Caco-2 (cell line): ENCODE measurements at regions of chr4 and their contacts with region 1.

Region 1: DNA sequence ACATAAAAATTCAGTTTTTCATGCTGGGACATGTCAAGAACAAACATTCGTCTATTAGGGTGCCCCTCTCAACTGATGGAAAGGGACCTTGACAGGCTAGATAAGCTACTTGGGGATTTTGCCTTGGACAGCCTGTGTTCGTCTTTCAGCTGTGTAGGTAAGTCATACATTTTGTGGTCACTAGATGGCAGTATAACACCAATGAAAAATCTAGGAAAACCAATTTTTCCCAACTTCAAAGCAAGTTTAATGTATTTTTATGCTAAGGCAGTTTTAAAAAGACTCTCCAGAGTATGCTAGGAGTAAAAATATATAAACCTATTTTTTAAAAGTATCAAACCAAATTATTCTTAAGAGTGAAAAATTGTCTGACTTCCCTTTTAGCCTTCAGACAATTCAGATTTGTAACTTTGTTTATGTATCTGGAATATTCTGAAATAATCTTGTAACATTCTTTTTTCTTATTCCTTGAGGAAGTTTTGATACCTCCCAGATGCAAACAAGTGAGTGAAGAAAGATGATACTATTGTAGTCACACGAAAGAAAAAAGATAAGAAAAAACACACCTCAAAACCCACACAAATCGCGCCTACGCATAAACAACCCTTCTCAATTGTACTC is 158.3 kb downstream of the CPE start:
- DNase-seq: peak in 1 of 2 experiments; percentile 40
- H3K4me3 ChIP-seq: no peak overlapping the region
- H3K4me3 Mint-ChIP-seq: no peak overlapping the region
- H3K27ac Mint-ChIP-seq: no peak overlapping the region
- H3K4me1 ChIP-seq: no peaks in the 10 kb centered on the region
- H3K4me1 Mint-ChIP-seq: no peaks in the 10 kb centered on the region
- H3K27me3 ChIP-seq: no peaks in the 10 kb centered on the region
- H3K27me3 Mint-ChIP-seq: no peaks in the 10 kb centered on the region
- CTCF ChIP-seq: peak; percentile 39 to 52

Region 2: GRCh38 chr4:165464813-165465381 is 72.2 kb before region 1 on chr4:
- CTCF ChIA-PET with region 1: no interaction called
- POLR2A ChIA-PET with region 1: no interaction called
- intact Hi-C with region 1: no loop called
- DNase-seq: peak in 1 of 2 experiments; percentile 19
- H3K4me3 ChIP-seq: no peak overlapping the region
- H3K4me3 Mint-ChIP-seq: no peak overlapping the region
- H3K27ac Mint-ChIP-seq: no peak overlapping the region
- H3K4me1 ChIP-seq: peaks cover 19% of the 10 kb centered on the region
- H3K4me1 Mint-ChIP-seq: peaks cover 13% of the 10 kb centered on the region
- H3K27me3 ChIP-seq: no peaks in the 10 kb centered on the region
- H3K27me3 Mint-ChIP-seq: no peaks in the 10 kb centered on the region
- CTCF ChIP-seq: peak; percentile 66 to 71

Region 3: DNA sequence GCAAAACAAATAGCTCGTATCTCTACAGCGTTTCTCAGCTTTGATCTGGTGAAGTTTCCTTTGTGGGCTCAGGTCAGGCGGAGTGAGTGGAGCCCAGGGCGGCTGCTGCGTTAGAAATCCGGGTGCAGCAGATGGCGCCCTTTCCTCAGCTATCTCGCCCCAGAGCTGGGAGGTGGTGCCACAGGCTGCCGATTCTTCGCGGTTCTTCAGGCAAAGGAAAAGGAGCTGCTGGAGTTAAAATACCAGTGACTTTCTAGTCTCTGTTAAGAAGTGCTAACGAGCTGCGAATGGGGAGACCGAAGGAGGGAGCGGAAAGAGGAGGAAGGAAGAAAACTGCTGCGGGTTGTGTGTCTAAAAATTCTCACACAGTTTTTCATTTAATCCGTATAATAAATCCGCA is 43.8 kb before region 1 on chr4:
- CTCF ChIA-PET with region 1: interaction called, 11 read pairs
- POLR2A ChIA-PET with region 1: no interaction called
- intact Hi-C with region 1: loop called (anchors 1 kb)
- DNase-seq: peak; percentile 72 to 81
- H3K4me3 ChIP-seq: no peak overlapping the region
- H3K4me3 Mint-ChIP-seq: peak overlapping the region; percentile 48
- H3K27ac Mint-ChIP-seq: no peak overlapping the region
- H3K4me1 ChIP-seq: no peaks in the 10 kb centered on the region
- H3K4me1 Mint-ChIP-seq: peaks cover 7% of the 10 kb centered on the region
- H3K27me3 ChIP-seq: no peaks in the 10 kb centered on the region
- H3K27me3 Mint-ChIP-seq: no peaks in the 10 kb centered on the region
- CTCF ChIP-seq: peak; percentile 70

Region 4: DNA sequence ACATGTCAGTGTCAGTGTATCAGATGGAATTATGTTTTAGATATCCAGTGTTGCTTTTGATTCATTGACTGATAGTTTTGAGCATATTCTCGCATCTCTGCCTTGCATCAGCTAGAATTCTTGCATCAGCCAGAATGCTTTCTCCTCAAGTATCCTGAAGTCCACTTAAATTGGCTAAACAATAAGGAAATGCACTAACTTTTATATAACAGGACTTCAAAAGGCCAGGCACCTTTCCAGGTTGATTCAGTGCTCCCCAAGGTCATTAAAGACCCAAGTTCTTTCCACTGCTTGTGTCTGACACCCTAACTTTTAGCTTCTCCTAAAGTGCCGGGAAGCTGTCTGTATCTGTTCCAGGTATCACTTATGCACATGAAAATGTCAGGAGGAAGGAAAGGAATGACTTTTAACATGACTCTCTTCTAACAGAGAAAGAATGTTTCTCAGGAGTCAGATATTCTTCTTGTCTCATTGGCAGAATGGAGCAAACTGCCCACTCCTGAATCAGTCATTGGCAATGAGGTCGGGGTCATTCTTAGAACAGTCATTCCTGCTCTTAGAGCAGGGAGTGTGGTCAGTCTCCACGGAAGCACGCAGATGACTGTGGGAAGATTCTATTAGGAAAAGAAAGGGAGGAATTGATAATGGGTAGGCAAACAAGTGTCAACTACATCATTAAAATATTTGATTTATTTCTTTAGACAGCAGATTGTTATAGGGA is 243.0 kb after region 1 on chr4:
- CTCF ChIA-PET with region 1: interaction called, 3 read pairs
- POLR2A ChIA-PET with region 1: no interaction called
- intact Hi-C with region 1: loop called (anchors 1 kb)
- DNase-seq: no peak
- H3K4me3 ChIP-seq: no peak overlapping the region
- H3K4me3 Mint-ChIP-seq: no peak overlapping the region
- H3K27ac Mint-ChIP-seq: no peak overlapping the region
- H3K4me1 ChIP-seq: no peaks in the 10 kb centered on the region
- H3K4me1 Mint-ChIP-seq: no peaks in the 10 kb centered on the region
- H3K27me3 ChIP-seq: no peaks in the 10 kb centered on the region
- H3K27me3 Mint-ChIP-seq: no peaks in the 10 kb centered on the region
- CTCF ChIP-seq: no peak

Region 5: GRCh38 chr4:166091912-166092510 is 554.9 kb after region 1 on chr4:
- CTCF ChIA-PET with region 1: interaction called, 6 read pairs
- POLR2A ChIA-PET with region 1: no interaction called
- intact Hi-C with region 1: loop called (anchors 1 kb)
- DNase-seq: no peak
- H3K4me3 ChIP-seq: no peak overlapping the region
- H3K4me3 Mint-ChIP-seq: no peak overlapping the region
- H3K27ac Mint-ChIP-seq: no peak overlapping the region
- H3K4me1 ChIP-seq: no peaks in the 10 kb centered on the region
- H3K4me1 Mint-ChIP-seq: peaks cover 8% of the 10 kb centered on the region
- H3K27me3 ChIP-seq: no peaks in the 10 kb centered on the region
- H3K27me3 Mint-ChIP-seq: no peaks in the 10 kb centered on the region
- CTCF ChIP-seq: peak; percentile 46 to 61

Region 6: DNA sequence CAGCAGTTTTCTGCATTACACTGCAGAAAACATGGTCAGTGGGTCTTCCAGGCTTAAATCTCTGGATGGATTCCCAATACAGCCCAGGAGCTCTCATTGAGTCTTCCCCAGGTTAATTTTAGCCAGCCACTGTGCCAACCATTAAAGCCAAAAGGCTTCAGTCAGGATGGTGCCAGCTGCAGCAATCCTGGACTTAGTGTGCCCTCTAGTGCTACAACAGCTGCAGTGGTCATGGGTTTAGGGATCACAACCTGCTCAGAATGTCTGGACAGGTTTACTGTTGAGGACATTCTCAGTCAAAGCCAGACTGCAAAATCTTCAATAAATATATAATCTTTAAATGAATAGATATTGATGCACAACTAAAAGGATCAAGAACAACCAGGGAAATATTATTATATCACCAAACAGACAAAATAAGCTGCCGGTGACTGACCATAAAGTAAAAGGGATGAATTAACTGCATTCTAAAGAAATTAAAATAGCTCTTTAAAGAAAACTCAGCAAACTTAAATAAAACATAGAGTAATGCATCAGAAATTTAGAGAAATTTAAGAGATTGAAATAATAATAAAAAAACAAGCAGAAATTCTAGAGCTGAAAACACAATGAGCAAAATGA is 1057.3 kb after region 1 on chr4:
- CTCF ChIA-PET with region 1: no interaction called
- POLR2A ChIA-PET with region 1: no interaction called
- intact Hi-C with region 1: loop called (anchors 5 kb)
- DNase-seq: peak; percentile 52 to 55
- H3K4me3 ChIP-seq: no peak overlapping the region
- H3K4me3 Mint-ChIP-seq: no peak overlapping the region
- H3K27ac Mint-ChIP-seq: no peak overlapping the region
- H3K4me1 ChIP-seq: no peaks in the 10 kb centered on the region
- H3K4me1 Mint-ChIP-seq: no peaks in the 10 kb centered on the region
- H3K27me3 ChIP-seq: no peaks in the 10 kb centered on the region
- H3K27me3 Mint-ChIP-seq: no peaks in the 10 kb centered on the region
- CTCF ChIP-seq: peak; percentile 68 to 81